ENCODE measurements at regions of chr4 and their contacts with region 1.

Region 1: DNA sequence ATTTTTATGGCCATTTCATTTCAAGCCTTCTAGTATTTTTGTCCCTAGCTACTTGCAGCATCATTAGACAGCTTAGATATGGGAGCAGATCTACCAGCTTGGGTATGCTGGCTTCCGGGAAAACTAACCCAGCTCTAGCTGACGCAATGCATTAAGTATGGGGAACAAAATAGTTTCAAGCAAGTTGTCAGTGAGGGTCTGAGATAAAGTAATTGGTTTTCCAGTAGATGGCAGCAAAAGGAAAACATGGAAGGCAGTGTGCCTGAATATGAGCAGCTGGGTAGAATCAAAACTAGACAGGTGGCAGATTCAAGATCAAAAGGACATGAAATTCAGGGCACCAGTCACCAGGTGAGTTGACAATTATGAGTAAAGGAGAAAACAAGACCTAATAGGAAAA is 340.9 kb upstream of the CTSO start:
- DNase-seq: peak; percentile 87
- ATAC-seq: peak; percentile 70
- H3K4me3 ChIP-seq: no peak overlapping the region
- H3K27ac ChIP-seq: no peak overlapping the region
- H3K4me1 ChIP-seq: peaks cover 4% of the 10 kb centered on the region; the same call in 1 of the 2 replicates
- H3K27me3 ChIP-seq: no peaks in the 10 kb centered on the region
- CTCF ChIP-seq: peak; percentile 63
- POLR2A ChIP-seq: no peak
- RAD21 ChIP-seq: peak; percentile 63

Region 2: DNA sequence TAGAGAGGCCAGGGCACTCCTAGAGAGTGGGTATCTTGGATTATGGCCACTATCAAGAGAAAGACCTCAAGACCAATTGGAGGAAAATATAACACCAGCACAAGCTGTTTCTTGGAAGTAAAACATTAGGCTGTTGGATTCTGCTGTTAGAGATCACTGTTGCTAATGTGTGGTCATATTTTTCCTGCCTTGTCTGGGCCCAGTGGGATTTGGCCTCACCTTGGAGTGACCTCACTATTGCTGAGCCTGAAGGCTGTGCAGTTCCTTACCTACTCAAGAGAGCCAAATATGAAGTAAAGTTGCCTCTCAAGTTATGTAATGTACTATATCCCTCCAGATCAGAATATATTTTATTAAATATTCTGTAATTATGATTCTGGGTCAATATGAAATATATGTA is 14.5 kb after region 1 on chr4:
- CTCF ChIA-PET with region 1: no interaction called
- POLR2A ChIA-PET with region 1: no interaction called
- dilution Hi-C with region 1: no loop called
- in situ Hi-C with region 1: no loop called
- intact Hi-C with region 1: no loop called
- DNase-seq: no peak
- ATAC-seq: no peak
- H3K4me3 ChIP-seq: no peak overlapping the region
- H3K27ac ChIP-seq: no peak overlapping the region
- H3K4me1 ChIP-seq: no peaks in the 10 kb centered on the region
- H3K27me3 ChIP-seq: no peaks in the 10 kb centered on the region
- CTCF ChIP-seq: no peak
- POLR2A ChIP-seq: no peak
- RAD21 ChIP-seq: no peak

Region 3: DNA sequence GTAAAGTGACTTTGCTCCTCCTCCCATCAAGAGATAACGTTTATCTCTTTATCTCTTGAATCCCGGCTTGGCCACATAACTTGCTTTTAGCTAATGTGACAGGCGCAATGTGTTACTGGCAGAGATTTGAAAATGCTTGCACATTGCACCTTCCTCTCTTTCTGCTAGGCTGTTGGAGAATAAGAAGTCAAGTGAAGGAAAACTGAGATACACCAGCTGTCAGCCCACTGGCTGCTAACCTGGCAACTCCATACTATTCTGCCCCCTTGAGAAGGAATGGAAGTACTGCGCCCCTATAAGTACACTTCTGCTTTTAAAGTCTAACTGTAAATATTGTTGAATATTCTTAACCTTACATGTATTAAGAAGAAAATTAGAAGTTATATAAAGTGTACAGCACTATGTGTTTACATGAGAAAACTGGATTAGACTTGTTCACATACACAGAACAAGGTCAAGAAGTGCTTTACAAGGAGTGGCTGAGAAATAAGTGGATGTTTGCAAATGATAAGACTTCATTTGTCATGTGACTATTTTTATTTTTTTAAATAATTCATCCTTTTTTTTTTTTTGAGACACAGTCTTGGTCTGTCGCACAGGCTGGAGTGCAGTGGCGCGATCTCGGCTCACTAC is 83.6 kb after region 1 on chr4:
- CTCF ChIA-PET with region 1: interaction called, 3 read pairs
- POLR2A ChIA-PET with region 1: no interaction called
- dilution Hi-C with region 1: no loop called
- in situ Hi-C with region 1: no loop called
- intact Hi-C with region 1: loop called (anchors 1 kb)
- DNase-seq: peak; percentile 71
- ATAC-seq: peak; percentile 89
- H3K4me3 ChIP-seq: no peak overlapping the region
- H3K27ac ChIP-seq: no peak overlapping the region
- H3K4me1 ChIP-seq: peaks cover 2% of the 10 kb centered on the region
- H3K27me3 ChIP-seq: no peaks in the 10 kb centered on the region
- CTCF ChIP-seq: peak; percentile 69
- POLR2A ChIP-seq: no peak
- RAD21 ChIP-seq: peak; percentile 67

Region 4: DNA sequence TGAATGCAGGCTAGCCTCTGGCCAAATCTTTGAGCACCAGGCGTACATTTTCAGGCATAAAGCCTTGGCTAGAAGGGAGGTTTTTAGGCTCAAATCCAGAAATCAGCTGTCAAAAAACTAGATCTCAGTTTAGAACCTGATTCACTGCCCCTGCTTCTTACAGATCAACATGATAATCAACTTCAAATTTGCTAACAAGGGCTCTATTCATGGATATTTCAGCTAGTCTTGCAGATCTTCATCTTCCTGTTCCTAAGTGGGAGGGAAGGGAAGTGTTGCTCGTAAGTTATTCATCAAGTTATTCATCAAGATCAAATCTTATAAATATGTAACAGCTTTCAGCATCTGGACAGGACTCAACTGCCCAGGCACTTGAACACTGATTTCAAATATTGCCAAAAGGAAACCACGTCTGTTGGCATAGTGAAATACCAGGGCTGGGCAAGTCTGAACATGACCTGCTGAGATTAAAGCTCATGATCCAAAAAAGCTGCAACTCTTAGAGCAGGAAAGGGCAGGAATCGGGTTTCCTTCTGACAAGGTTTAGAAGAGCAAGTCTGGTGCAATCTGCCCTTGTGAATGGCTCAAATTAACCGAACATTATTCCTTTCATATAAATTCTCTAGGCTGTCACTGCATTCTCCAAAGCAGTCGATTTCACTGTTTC is 476.7 kb after region 1 on chr4:
- CTCF ChIA-PET with region 1: no interaction called
- POLR2A ChIA-PET with region 1: no interaction called
- dilution Hi-C with region 1: no loop called
- in situ Hi-C with region 1: no loop called
- intact Hi-C with region 1: loop called (anchors 10 kb)
- DNase-seq: peak; percentile 69
- ATAC-seq: peak; percentile 69
- H3K4me3 ChIP-seq: no peak overlapping the region
- H3K27ac ChIP-seq: peak overlapping the region; percentile 91
- H3K4me1 ChIP-seq: peaks cover 10% of the 10 kb centered on the region
- H3K27me3 ChIP-seq: no peaks in the 10 kb centered on the region
- CTCF ChIP-seq: no peak
- POLR2A ChIP-seq: no peak
- RAD21 ChIP-seq: no peak

Region 5: DNA sequence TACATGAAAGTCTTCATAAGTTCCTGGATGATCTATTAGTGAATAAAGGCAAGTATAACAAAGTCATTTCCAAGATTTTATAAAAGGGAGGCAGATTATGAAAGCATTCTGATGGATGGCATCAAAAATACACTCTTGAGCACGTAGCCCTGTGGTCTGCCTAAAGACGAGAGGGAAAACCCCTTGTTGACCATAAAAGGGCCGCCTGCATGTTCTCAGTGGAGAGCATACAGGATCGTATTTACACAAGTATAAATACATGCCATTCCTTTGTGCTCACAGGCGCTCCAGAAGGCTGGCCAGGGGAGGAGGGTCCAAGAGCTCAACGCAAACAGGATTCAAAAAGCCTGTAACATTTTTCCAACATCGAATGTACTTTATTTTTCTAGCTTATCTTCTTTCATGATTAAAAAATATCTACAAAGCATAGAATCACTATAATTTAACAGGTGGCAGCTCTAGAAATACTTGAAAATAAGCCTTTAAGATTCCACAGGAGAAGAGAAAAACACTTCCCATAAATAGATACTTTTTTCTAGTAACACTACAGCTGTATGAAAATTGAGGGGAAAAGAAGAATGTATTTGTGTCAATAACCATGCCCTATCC is 647.5 kb after region 1 on chr4:
- CTCF ChIA-PET with region 1: no interaction called
- POLR2A ChIA-PET with region 1: no interaction called
- dilution Hi-C with region 1: no loop called
- in situ Hi-C with region 1: no loop called
- intact Hi-C with region 1: loop called (anchors 1 kb)
- DNase-seq: peak; percentile 97
- ATAC-seq: peak; percentile 93
- H3K4me3 ChIP-seq: no peak overlapping the region
- H3K27ac ChIP-seq: peak overlapping the region; percentile 62; the same call in 1 of the 2 replicates
- H3K4me1 ChIP-seq: peaks cover 17% of the 10 kb centered on the region
- H3K27me3 ChIP-seq: no peaks in the 10 kb centered on the region
- CTCF ChIP-seq: no peak
- POLR2A ChIP-seq: no peak
- RAD21 ChIP-seq: peak; percentile 22; the same call in 1 of the 2 replicates